ENCODE measurements at regions of chr3 and their contacts with region 1.

Region 1: GRCh38 chr3:36919439-36920160 is 25.3 kb downstream of the TRANK1 start:
- DNase-seq: peak in 1 of 2 experiments; percentile 27
- H3K4me3 ChIP-seq: no peak overlapping the region
- H3K4me3 Mint-ChIP-seq: no peak overlapping the region
- H3K27ac Mint-ChIP-seq: no peak overlapping the region
- H3K4me1 ChIP-seq: peaks cover 14% of the 10 kb centered on the region
- H3K4me1 Mint-ChIP-seq: peaks cover 21% of the 10 kb centered on the region
- H3K27me3 ChIP-seq: no peaks in the 10 kb centered on the region
- H3K27me3 Mint-ChIP-seq: no peaks in the 10 kb centered on the region
- CTCF ChIP-seq: no peak

Region 2: DNA sequence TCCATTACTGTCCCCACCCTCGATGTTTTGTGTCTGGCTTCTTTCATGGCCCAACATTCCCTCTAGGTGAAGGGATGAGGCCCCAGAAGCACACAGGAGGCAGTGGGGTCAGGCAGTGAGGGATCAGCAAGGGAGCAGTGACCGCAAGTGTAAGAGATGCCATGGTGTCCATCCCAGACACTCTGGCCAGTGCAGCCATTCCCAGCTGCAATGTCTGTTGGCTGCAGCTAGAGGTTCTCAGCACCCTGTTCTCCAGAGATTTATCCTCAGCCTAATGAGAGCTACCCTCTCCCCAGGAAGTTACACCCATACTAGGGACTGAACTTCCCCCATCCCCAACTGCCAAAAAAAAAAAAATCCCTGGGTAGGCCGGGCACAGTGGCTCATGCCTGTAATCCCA is 15.0 kb before region 1 on chr3:
- CTCF ChIA-PET with region 1: interaction called, 11 read pairs
- POLR2A ChIA-PET with region 1: no interaction called
- intact Hi-C with region 1: no loop called
- DNase-seq: peak in 1 of 2 experiments; percentile 44
- H3K4me3 ChIP-seq: no peak overlapping the region
- H3K4me3 Mint-ChIP-seq: no peak overlapping the region
- H3K27ac Mint-ChIP-seq: no peak overlapping the region
- H3K4me1 ChIP-seq: 0 out of 2 replicates have a peak, but pooled peaks cover 8% of the 10 kb centered on the region
- H3K4me1 Mint-ChIP-seq: peaks cover 22% of the 10 kb centered on the region
- H3K27me3 ChIP-seq: no peaks in the 10 kb centered on the region
- H3K27me3 Mint-ChIP-seq: no peaks in the 10 kb centered on the region
- CTCF ChIP-seq: peak in 1 of 2 experiments; percentile 67

Region 3: GRCh38 chr3:37324850-37325321 is 405.3 kb after region 1 on chr3:
- CTCF ChIA-PET with region 1: no interaction called
- POLR2A ChIA-PET with region 1: no interaction called
- intact Hi-C with region 1: no loop called
- DNase-seq: no peak
- H3K4me3 ChIP-seq: no peak overlapping the region
- H3K4me3 Mint-ChIP-seq: no peak overlapping the region
- H3K27ac Mint-ChIP-seq: no peak overlapping the region
- H3K4me1 ChIP-seq: no peaks in the 10 kb centered on the region
- H3K4me1 Mint-ChIP-seq: no peaks in the 10 kb centered on the region
- H3K27me3 ChIP-seq: no peaks in the 10 kb centered on the region
- H3K27me3 Mint-ChIP-seq: no peaks in the 10 kb centered on the region
- CTCF ChIP-seq: no peak